CD4-positive, alpha-beta memory T cell (primary cell): ENCODE measurements at regions of chr11 and their contacts with region 1.

Region 1: GRCh38 chr11:68903288-68904247 is at the starts of genes IGHMBP2 and MRPL21:
- DNase-seq: peak; percentile 79 to 85 (median 80)
- H3K4me3 ChIP-seq: peak within 1 kb of the TSS; percentile 48 to 90
- H3K4me3 Mint-ChIP-seq: peak within 1 kb of the TSS; percentile 91 to 99 (median 97)
- H3K27ac ChIP-seq: peak within 1 kb of the TSS; percentile 86
- H3K27ac Mint-ChIP-seq: peak within 1 kb of the TSS; percentile 94 to 97 (median 96)
- H3K4me1 ChIP-seq: peaks cover 31% of the 10 kb centered on the region
- H3K4me1 Mint-ChIP-seq: peaks cover 34 to 55% (median 44%) of the 10 kb centered on the region in 4 donors
- H3K27me3 ChIP-seq: no peaks in the 10 kb centered on the region
- H3K27me3 Mint-ChIP-seq: no peaks in the 10 kb centered on the region
- total RNA-seq, gene IGHMBP2: 36.8 to 37.6 TPM
- total RNA-seq, gene MRPL21: 36.2 to 37.3 TPM

Region 2: DNA sequence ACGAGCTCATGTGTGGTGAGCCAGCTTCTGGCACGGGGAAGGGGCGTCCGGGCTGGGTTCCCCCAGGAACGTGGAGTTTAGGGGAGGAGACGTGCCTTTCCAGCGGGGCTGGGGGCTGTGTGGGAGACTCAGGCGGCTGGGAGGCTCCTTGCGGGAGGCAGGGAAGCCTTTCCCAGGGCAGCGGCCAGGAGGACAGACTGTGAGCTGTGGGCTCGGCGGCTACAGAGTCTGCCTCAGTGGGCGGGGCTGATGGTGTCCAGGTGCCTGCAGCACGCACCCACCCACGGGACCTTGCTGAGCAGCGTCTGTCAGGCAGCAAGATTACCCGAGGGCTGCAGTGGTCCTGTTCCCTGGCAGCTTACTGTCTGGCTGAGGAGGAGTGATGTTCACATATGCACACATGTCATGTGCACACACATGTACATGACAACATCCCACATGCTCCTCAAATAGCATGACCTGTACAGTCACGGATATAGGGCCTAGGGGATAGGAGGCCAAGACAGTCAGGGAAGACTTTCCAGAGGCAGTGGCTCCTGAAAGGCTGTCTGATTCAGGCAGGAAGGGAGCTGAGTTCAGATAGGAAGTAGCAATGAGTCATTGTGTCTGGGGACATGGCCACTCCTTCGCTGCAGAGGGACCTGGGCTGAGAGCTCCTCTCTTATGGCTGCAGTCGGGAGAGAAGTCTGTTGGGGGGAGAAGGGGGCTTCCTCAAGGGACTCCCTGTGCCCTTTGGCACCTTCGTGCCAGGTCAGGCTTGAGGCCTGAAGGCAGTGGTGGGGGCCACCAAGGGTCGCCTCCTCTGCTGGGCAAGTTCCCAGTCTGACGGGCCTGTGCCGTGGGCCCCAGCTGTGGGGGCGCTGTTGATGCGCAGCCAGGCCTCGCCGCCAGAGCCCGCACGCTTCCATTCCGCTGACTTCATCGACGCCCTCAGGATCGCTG is 466.3 kb before region 1 on chr11:
- CTCF ChIA-PET with region 1: no interaction called
- POLR2A ChIA-PET with region 1: no interaction called
- intact Hi-C with region 1: no loop called
- DNase-seq: no peak
- H3K4me3 ChIP-seq: no peak overlapping the region
- H3K4me3 Mint-ChIP-seq: no peak overlapping the region
- H3K27ac ChIP-seq: no peak overlapping the region
- H3K27ac Mint-ChIP-seq: no peak overlapping the region
- H3K4me1 ChIP-seq: no peaks in the 10 kb centered on the region
- H3K4me1 Mint-ChIP-seq: peaks cover 0 to 5% (median 2%) of the 10 kb centered on the region in 4 donors
- H3K27me3 ChIP-seq: no peaks in the 10 kb centered on the region
- H3K27me3 Mint-ChIP-seq: no peaks in the 10 kb centered on the region

Region 3: DNA sequence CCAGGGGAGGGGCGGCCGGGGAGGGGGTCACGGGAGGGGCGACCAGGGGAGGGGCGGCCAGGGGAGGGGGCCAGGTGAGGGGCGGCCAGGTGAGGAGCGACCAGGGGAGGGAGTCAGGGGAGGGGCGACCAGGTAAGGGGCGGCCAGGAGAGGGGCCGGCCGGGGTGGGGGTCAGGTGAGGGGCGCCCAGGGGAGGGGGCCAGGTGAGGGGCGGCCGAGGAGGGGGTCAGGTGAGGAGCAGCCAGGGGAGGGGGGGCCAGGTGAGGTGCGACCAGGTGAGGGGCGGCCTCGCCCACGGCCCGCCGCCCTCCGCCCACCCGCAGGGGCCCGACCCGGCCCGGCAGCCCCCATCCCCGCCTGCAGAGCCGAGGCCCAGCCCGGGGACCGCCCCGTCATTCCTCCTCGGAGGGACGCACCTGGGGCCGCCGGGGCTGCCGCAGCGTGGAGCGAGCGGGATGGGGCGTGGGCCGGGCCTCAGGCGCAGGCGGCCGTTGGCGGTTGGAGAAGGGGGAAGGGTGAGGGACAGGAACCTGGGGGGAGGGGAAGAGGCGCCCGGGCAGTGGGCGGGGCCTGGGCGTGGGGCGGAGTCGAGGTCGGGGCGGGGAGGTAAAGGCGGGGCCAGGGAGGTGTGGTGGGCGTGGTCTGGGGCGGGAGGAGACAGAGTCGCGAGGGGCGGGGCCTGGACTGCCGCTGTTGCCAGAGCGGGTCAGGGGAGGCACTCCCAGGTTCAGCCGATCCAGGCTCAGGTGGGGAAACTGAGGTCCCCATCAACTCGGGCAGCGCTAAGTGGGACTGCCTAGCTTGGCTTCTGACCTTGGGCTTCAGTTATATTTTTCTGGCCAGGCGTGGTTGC is 152.3 kb before region 1 on chr11 and contains the start of gene TESMIN:
- CTCF ChIA-PET with region 1: no interaction called
- POLR2A ChIA-PET with region 1: no interaction called
- intact Hi-C with region 1: loop called (anchors 1 kb)
- DNase-seq: peak; percentile 84 to 89 (median 87)
- H3K4me3 ChIP-seq: peak within 1 kb of the TSS in 1 of 2 donors; percentile 62
- H3K4me3 Mint-ChIP-seq: peak within 1 kb of the TSS; percentile 71 to 84 (median 82)
- H3K27ac ChIP-seq: no peak within 1 kb of the TSS
- H3K27ac Mint-ChIP-seq: peak within 1 kb of the TSS; percentile 34 to 88 (median 77)
- H3K4me1 ChIP-seq: peaks cover 4% of the 10 kb centered on the region
- H3K4me1 Mint-ChIP-seq: peaks cover 8 to 27% (median 14%) of the 10 kb centered on the region in 4 donors
- H3K27me3 ChIP-seq: no peaks in the 10 kb centered on the region
- H3K27me3 Mint-ChIP-seq: no peaks in the 10 kb centered on the region
- total RNA-seq, gene TESMIN: 5.7 to 5.8 TPM

Region 4: DNA sequence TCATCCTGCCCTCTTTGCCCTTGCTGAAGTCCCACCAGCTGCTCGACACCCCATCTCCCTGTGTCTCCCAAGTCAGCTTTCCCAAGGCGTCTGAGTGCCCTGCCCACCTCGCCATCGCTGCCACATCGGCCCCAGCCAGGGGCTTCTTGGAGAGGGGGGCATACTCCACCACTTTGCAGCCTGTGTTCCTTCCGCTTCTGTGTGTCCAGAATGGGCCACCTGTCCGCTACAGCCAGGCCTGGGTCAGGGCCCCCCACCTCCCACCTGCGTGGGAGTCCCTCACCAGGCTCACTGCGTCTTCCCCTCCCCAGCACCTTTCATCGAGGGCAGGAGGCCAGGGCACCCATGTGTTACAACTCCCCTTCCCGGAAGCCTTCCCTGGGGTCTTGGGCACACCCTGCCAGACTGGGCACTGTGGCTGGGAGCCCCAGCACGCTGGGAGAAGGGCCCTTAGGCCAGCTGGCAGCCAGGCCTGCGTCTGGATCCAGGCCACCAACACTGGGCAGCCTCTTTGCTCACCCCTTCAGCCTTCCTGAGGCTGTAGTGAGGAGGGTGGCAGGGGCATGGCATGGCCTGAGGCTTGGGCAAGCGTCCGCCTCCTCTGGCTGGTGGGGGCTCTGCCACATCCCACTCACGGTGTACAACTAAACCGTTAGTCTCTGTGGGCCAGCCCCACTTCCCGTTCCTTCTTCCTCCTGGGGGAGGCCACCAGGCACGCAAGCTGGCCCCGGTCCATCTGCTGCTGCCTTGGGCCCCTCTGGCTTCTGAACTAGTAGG is 75.2 kb before region 1 on chr11:
- CTCF ChIA-PET with region 1: no interaction called
- POLR2A ChIA-PET with region 1: no interaction called
- intact Hi-C with region 1: no loop called
- DNase-seq: no peak
- H3K4me3 ChIP-seq: no peak overlapping the region
- H3K4me3 Mint-ChIP-seq: no peak overlapping the region
- H3K27ac ChIP-seq: no peak overlapping the region
- H3K27ac Mint-ChIP-seq: peak overlapping the region in 3 of 7 donors; percentile 60 to 70 (median 67)
- H3K4me1 ChIP-seq: peaks cover 16% of the 10 kb centered on the region
- H3K4me1 Mint-ChIP-seq: peaks cover 22 to 65% (median 42%) of the 10 kb centered on the region in 4 donors
- H3K27me3 ChIP-seq: no peaks in the 10 kb centered on the region
- H3K27me3 Mint-ChIP-seq: no peaks in the 10 kb centered on the region

Region 5: GRCh38 chr11:68889948-68890446 is 13.6 kb before region 1 on chr11:
- CTCF ChIA-PET with region 1: no interaction called
- POLR2A ChIA-PET with region 1: no interaction called
- intact Hi-C with region 1: no loop called
- DNase-seq: no peak
- H3K4me3 ChIP-seq: no peak overlapping the region
- H3K4me3 Mint-ChIP-seq: no peak overlapping the region
- H3K27ac ChIP-seq: no peak overlapping the region
- H3K27ac Mint-ChIP-seq: no peak overlapping the region
- H3K4me1 ChIP-seq: no peaks in the 10 kb centered on the region
- H3K4me1 Mint-ChIP-seq: no peaks in the 10 kb centered on the region
- H3K27me3 ChIP-seq: no peaks in the 10 kb centered on the region
- H3K27me3 Mint-ChIP-seq: no peaks in the 10 kb centered on the region

Region 6: DNA sequence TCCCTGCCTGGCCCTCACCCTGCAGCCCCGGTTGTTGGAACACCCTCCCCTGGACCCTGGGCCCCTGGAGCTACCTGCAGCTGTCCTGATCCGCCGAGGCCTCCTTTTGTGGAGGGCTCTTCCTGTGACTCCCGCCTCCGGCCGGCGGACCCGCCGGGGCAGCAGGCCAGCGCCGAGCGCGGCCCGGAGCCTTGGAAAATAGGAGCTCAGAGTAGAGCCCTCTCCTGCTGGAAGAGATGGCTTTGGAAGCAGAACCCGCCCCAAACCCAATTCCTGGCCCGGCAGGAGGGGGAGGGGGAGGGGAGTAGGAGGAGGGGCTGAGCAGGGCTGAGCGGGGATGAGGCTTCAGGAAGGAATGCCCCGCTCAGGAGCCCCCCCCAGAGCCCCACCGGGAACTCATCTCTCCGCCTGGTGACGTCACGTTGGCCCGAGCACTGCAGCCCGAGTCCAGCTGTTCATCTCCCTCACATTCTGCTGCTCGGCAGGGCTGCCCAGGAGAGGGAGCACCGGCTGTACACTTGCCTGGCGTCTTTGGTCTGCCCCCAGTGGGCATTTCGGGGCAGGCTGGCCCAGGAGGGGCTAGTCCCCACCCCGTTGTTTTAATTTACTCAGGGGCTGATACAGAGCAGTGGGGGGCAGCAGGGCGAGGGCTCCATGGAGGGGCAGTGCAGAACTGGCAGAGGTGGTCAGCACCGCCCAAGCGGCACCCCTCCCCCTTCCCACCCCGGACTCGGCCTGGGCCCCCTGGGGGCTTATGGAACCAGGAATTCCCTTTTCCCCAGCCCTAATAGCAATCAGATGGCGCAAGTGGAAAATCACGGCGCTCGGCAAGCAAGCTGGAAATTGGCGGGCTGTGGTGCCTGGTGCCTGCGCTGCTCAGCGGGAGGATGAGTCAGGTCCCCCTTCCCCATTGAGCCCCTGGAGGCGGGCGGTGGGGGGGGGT is 109.7 kb after region 1 on chr11 and contains the start of gene MRGPRF:
- CTCF ChIA-PET with region 1: no interaction called
- POLR2A ChIA-PET with region 1: no interaction called
- intact Hi-C with region 1: no loop called
- DNase-seq: peak in 1 of 5 donors; percentile 13
- H3K4me3 ChIP-seq: no peak within 1 kb of the TSS
- H3K4me3 Mint-ChIP-seq: peak within 1 kb of the TSS in 3 of 8 donors; percentile 8 to 41 (median 36)
- H3K27ac ChIP-seq: no peak within 1 kb of the TSS
- H3K27ac Mint-ChIP-seq: no peak within 1 kb of the TSS
- H3K4me1 ChIP-seq: no peaks in the 10 kb centered on the region
- H3K4me1 Mint-ChIP-seq: peaks cover 0 to 10% (median 4%) of the 10 kb centered on the region in 4 donors
- H3K27me3 ChIP-seq: no peaks in the 10 kb centered on the region
- H3K27me3 Mint-ChIP-seq: peaks cover 14 to 15% of the 10 kb centered on the region in 2 donors
- total RNA-seq, gene MRGPRF: not detected

Region 7: DNA sequence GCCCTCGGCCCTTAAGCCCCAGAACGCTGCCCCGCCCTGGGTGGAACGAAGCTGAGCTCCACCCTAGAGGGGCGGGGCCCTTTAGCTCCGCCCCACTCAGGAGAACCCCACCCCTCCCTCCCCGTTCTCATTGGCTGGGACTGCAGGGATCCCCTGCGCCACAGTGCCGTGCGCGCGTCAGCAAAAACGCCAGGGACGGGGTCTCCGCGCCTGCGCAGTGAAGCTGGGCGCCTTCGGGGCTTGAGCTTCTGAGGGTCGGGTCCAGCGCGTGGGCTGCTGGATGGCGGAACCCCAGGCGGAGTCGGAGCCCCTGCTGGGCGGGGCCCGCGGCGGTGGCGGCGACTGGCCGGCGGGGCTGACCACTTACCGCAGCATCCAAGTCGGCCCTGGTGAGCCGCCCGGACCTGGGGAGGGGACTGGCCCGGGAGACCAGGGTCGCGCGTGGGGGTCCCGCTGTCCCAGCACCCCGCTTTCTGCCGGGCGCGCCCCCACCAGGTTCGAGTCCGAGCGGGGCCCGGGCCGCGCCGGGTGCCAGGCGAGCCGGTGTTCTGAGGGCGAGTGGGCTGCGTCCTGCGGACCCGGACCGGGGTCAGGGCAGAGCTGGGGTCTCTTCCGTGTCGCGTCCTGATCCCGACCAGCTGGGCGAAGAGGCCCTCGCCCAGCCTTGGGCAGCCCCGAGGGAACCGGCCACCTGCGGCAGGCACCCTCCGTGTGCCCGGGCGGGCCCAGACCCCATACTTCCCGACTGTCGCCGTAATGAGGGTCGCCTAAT is 145.3 kb after region 1 on chr11 and contains the start of gene TPCN2:
- CTCF ChIA-PET with region 1: no interaction called
- POLR2A ChIA-PET with region 1: interaction called, 4 read pairs
- intact Hi-C with region 1: loop called (anchors 2 kb)
- DNase-seq: peak; percentile 90 to 94 (median 92)
- H3K4me3 ChIP-seq: peak within 1 kb of the TSS; percentile 42 to 80
- H3K4me3 Mint-ChIP-seq: peak within 1 kb of the TSS; percentile 82 to 86 (median 84)
- H3K27ac ChIP-seq: peak within 1 kb of the TSS; percentile 84
- H3K27ac Mint-ChIP-seq: peak within 1 kb of the TSS; percentile 86 to 96 (median 91)
- H3K4me1 ChIP-seq: peaks cover 30% of the 10 kb centered on the region
- H3K4me1 Mint-ChIP-seq: peaks cover 7 to 45% (median 22%) of the 10 kb centered on the region in 4 donors
- H3K27me3 ChIP-seq: no peaks in the 10 kb centered on the region
- H3K27me3 Mint-ChIP-seq: no peaks in the 10 kb centered on the region
- total RNA-seq, gene TPCN2: 22.4 to 23.0 TPM

Region 8: GRCh38 chr11:69088676-69089146 is 185.1 kb after region 1 on chr11:
- CTCF ChIA-PET with region 1: no interaction called
- POLR2A ChIA-PET with region 1: no interaction called
- intact Hi-C with region 1: loop called (anchors 5 kb)
- DNase-seq: peak in 4 of 5 donors; percentile 34 to 46 (median 38)
- H3K4me3 ChIP-seq: no peak overlapping the region
- H3K4me3 Mint-ChIP-seq: no peak overlapping the region
- H3K27ac ChIP-seq: no peak overlapping the region
- H3K27ac Mint-ChIP-seq: peak overlapping the region in 3 of 7 donors; percentile 14 to 66 (median 23)
- H3K4me1 ChIP-seq: no peaks in the 10 kb centered on the region
- H3K4me1 Mint-ChIP-seq: peaks cover 2 to 6% (median 4%) of the 10 kb centered on the region in 4 donors
- H3K27me3 ChIP-seq: no peaks in the 10 kb centered on the region
- H3K27me3 Mint-ChIP-seq: no peaks in the 10 kb centered on the region